H1 (cell line): ENCODE measurements at regions of chr4 and their contacts with region 1.

Region 1: DNA sequence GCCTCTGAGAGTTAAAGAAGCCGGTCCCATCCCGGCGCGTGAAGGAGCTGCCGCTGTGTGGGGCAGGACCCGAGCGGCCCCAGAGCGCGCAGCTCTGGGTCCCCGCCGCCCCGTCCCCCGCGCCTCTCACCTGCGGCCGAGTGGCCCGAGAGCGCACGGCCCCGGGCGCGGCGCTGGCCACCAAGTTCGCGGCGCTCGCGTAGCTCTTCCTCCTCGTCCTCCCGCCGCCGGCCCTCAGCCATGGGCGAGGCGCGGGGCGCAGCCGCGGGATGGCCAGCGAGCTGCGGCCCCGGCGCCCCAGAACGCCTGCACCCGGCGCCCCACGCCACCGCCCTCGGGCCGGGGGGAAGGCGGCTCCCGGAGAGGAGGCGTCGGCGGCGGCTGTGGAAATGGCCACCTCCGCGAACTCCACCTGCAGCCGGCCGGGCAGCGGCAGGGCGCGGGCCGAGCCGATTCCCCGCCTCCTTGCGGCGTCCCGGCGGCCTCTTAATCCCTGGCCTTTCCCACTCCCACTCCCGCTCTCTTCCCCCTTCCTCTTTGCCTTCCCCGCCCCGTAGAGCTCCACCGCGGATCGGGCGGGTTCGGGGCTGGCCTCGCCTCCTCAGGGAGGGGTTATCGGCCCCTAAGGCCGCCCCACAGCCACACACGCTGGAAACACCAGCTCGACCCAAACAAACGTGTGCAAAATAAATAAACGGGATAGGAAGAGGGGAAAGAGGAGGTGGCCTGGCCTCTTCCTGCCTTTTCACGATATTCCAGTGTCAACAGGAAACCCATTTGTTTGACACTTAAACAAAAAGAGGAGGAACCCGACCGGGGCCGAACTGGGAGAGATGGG is at the start of gene SH3D19:
- DNase-seq: peak in 1 of 2 experiments; percentile 75
- H3K4me3 ChIP-seq: peak within 1 kb of the TSS; percentile 65 to 86 (median 82)
- H3K27ac ChIP-seq: peak within 1 kb of the TSS; percentile 85
- H3K4me1 ChIP-seq: peaks cover 2 to 8% (median 6%) of the 10 kb centered on the region in 4 experiments; a peak in 4 of 7 replicates
- H3K27me3 ChIP-seq: no peaks in the 10 kb centered on the region
- CTCF ChIP-seq: no peak
- EP300 ChIP-seq: no peak
- POLR2A ChIP-seq: peak in 1 of 2 experiments; percentile 4; a peak in 2 of 3 replicates
- RAD21 ChIP-seq: no peak
- total RNA-seq, gene SH3D19: 51.3 and 55.8 TPM in 2 replicates

Region 2: GRCh38 chr4:151304755-151305154 is 20.6 kb before region 1 on chr4:
- CTCF ChIA-PET with region 1: interaction called, 3 read pairs
- POLR2A ChIA-PET with region 1: interaction called, 16 read pairs
- DNase-seq: no peak
- H3K4me3 ChIP-seq: no peak overlapping the region
- H3K27ac ChIP-seq: no peak overlapping the region
- H3K4me1 ChIP-seq: peaks cover 4 to 7% (median 4%) of the 10 kb centered on the region in 4 experiments
- H3K27me3 ChIP-seq: no peaks in the 10 kb centered on the region
- CTCF ChIP-seq: peak in 1 of 3 experiments; percentile 10; a peak in 1 of 4 replicates
- EP300 ChIP-seq: no peak
- POLR2A ChIP-seq: no peak
- RAD21 ChIP-seq: no peak; a peak in 1 of 4 replicates

Region 3: GRCh38 chr4:151339467-151339866 is 14.1 kb after region 1 on chr4:
- CTCF ChIA-PET with region 1: interaction called, 5 read pairs
- POLR2A ChIA-PET with region 1: interaction called, 11 read pairs
- DNase-seq: no peak
- H3K4me3 ChIP-seq: no peak overlapping the region
- H3K27ac ChIP-seq: no peak overlapping the region
- H3K4me1 ChIP-seq: no peaks in the 10 kb centered on the region
- H3K27me3 ChIP-seq: no peaks in the 10 kb centered on the region
- CTCF ChIP-seq: no peak
- EP300 ChIP-seq: no peak
- POLR2A ChIP-seq: no peak
- RAD21 ChIP-seq: no peak

Region 4: DNA sequence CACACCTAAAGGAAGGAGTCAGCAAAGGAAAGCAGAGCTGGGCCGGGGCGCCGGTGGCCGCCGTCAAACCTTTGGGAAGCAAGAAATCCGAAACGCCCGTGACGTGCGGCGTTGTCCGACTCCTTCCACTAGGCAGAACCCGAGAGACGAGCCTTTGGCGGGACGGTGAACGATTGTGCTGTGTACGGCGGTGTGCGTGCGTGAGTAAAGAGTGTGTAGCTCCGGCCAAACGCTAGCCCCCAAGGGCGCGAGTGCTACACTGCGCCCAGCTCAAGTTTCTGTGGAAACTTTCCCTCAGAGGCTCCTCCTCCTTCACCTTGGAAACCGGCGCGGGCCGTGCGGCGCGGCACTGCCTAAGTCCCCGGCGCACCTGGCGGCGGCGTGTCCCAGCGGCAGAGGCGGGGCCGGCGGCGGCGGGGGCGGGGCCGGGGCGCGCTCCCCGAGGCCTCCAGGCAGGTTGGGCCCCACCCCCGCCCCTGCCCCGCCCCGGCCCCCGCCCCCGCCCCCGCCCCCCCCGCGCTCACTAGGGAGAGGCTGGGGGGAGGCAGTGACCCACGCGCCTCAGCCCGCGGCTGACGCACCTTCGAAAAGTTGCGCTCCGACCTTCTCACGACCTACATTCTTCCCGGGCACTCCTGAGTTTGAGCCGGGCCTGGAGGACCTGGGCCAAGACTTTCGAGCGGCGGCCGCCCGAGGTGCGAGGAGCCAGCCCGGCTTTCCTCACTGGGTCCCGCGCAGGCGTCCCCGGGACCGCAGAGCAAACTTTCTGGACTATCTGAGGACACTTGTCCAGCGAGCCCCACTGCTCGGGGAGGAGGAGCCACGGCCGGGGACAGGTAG is 83.5 kb after region 1 on chr4 and contains the start of gene FHIP1A:
- CTCF ChIA-PET with region 1: no interaction called
- POLR2A ChIA-PET with region 1: interaction called, 14 read pairs
- DNase-seq: peak; percentile 84 to 95
- H3K4me3 ChIP-seq: peak within 1 kb of the TSS; percentile 71 to 91 (median 74)
- H3K27ac ChIP-seq: peak within 1 kb of the TSS; percentile 92
- H3K4me1 ChIP-seq: peaks cover 3 to 15% (median 6%) of the 10 kb centered on the region in 4 experiments; a peak in 6 of 7 replicates
- H3K27me3 ChIP-seq: no peaks in the 10 kb centered on the region
- CTCF ChIP-seq: peak in 2 of 3 experiments; percentile 1 to 2; a peak in 1 of 4 replicates
- EP300 ChIP-seq: no peak
- POLR2A ChIP-seq: peak; percentile 61 to 96
- RAD21 ChIP-seq: peak in 1 of 2 experiments; percentile 17; a peak in 1 of 4 replicates
- total RNA-seq, gene FHIP1A: 75.2 and 76.3 TPM in 2 replicates

Region 5: DNA sequence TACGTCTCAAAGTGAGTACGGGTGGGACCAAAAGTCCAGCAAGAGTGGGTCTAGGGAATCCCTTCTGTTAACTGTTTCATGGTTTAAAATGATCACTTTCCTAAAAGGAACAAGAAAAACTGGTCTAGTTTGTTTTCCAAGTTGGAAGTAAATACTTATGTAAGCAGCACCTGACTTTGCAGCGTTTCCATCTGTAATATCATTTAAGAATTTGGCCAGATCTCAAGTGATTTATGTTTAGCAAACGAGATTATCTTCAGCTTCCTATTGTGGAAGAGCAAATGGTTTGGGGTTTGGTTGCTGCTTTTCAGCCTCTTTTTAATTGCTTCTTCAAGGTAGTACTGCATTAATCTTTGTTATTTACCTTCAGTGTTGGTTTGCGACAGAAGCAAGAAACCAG is 134.0 kb after region 1 on chr4:
- CTCF ChIA-PET with region 1: no interaction called
- POLR2A ChIA-PET with region 1: no interaction called
- DNase-seq: no peak
- H3K4me3 ChIP-seq: no peak overlapping the region
- H3K27ac ChIP-seq: no peak overlapping the region
- H3K4me1 ChIP-seq: peaks cover 0 to 13% (median 9%) of the 10 kb centered on the region in 4 experiments; a peak in 3 of 7 replicates
- H3K27me3 ChIP-seq: no peaks in the 10 kb centered on the region
- CTCF ChIP-seq: no peak
- EP300 ChIP-seq: no peak
- POLR2A ChIP-seq: no peak
- RAD21 ChIP-seq: no peak